Left ventricle myocardium superior (tissue), 1 donor: ENCODE measurements at regions of chr14 and their contacts with region 1.

Region 1: GRCh38 chr14:53539489-53540126 is 386.5 kb upstream of the DDHD1 start:
- DNase-seq: peak; percentile 75
- ATAC-seq: peak; percentile 92

Region 2: DNA sequence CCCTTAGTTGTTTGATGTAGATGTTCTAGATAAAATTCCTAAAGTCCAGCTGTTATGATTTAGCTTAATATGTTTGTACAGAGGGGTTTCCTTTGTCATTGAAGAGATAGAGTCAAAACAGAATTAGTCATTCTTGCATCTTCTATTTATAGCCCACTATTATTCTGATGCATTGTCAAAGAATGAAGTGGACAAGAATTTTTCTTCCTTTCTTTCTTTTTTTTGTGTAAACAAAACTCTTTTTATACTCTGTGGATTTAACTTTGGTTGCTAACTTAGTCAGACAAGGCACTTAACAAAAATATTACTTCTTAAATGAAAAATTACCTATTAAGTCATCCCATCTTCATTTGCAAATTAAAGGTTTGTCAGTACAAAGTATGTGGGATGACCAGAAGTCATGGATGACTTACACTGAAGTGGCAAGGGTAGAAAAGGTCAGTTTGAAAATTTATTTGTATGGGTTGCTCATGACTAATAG is 170.9 kb before region 1 on chr14:
- intact Hi-C with region 1: no loop called
- DNase-seq: no peak
- ATAC-seq: no peak

Region 3: GRCh38 chr14:54173802-54174201 is 634.2 kb after region 1 on chr14:
- intact Hi-C with region 1: loop called (anchors 5 kb)
- DNase-seq: no peak
- ATAC-seq: peak; percentile 74

Region 4: DNA sequence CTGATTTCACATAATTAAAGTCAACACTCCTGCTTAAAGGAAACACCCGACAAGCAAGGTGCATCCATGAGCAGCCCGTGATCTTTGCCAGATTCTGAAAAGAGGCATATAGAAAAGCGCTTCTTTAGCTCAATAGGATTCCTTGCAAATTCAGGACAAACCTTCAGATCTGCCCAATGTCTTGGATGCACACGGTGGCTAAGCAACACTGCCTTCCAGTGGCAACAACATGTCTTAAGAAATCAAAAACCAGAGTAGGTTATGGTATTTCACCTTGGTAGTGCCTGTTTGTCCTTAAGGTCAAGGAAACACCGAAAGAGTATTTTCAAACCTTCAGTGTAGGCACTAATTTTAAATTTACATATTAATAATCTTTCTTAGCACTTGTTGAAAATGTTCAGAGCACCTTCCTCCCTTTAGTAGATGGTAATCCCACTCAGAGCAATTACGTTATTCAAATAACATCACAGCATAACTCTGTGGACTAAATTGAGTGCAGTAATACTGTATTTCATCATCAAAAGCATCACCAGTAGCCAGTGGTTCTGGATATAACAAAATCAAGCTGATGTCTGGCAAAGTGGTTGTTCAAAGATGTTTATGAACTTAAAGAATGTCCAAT is 799.2 kb after region 1 on chr14:
- intact Hi-C with region 1: loop called (anchors 10 kb)
- DNase-seq: no peak
- ATAC-seq: no peak